ENCODE measurements at regions of chr15 and their contacts with region 1.

Region 1: GRCh38 chr15:69181424-69181823 is 21.0 kb downstream of the GLCE start:
- DNase-seq: no peak
- H3K4me3 ChIP-seq: no peak overlapping the region
- H3K27ac ChIP-seq: no peak overlapping the region
- H3K4me1 ChIP-seq: no peaks in the 10 kb centered on the region
- H3K27me3 ChIP-seq: no peaks in the 10 kb centered on the region
- CTCF ChIP-seq: no peak

Region 2: DNA sequence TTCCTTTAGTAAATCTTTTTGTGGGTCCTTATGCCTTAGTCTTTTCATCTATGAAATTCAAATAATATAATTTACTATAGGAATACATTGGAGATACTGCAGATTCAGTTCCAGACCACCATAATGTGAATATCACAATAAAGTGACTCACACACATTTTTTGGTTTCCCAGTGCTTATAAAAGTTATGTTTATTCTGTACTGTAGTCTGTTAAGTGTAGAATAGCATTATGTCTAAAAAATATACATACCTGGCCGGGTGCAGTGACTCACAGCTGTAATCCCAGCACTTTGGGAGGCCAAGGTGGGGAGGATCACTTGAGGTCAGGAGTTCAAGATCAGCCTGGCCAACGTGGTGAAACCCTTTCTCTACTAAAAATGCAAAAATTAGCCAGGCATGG is 63.4 kb after region 1 on chr15:
- CTCF ChIA-PET with region 1: no interaction called
- dilution Hi-C with region 1: loop called (anchors 5 kb)
- in situ Hi-C with region 1: no loop called
- intact Hi-C with region 1: no loop called
- DNase-seq: no peak
- H3K4me3 ChIP-seq: no peak overlapping the region
- H3K27ac ChIP-seq: no peak overlapping the region
- H3K4me1 ChIP-seq: no peaks in the 10 kb centered on the region
- H3K27me3 ChIP-seq: no peaks in the 10 kb centered on the region
- CTCF ChIP-seq: no peak

Measured in mammary epithelial cell (primary cell).